IMR-90 (cell line): ENCODE measurements at regions of chr13 and their contacts with region 1.

Region 1: DNA sequence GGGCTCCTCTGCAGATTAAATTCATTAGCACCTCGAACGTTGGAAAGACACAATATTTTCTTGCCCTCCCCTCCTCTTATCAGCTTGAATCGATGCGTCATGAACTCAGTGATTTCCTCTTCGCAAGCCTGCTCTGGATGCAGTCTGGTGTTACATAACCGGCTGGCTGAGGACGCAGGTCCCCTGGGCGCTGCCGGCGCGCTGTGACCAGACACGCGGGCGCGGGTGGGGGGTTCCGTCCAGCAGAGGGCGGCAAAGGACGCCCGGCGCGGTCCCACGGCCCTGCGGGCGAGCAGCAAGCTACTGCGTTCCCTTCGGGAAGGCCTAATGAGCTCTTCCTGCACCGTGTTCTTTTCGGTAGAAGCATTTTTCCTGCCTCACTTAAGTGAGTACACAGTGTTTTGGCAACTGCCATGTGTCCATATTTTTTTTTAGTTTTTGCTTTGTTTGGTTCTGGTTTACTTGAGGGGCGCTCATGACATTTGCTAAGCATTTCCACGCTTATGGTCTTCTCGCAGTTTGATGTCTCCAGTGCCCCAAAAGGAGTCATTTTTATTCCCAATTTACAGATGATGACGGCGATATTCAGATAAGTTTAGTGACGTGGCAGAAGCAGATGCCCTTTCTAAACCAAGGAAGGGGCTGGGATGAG is 112.2 kb upstream of the MBNL2 start:
- DNase-seq: peak; percentile 85
- ATAC-seq: peak; percentile 90
- H3K4me3 ChIP-seq: no peak overlapping the region
- H3K27ac ChIP-seq: no peak overlapping the region
- H3K4me1 ChIP-seq: peaks cover 27% of the 10 kb centered on the region
- H3K27me3 ChIP-seq: no peaks in the 10 kb centered on the region
- CTCF ChIP-seq: peak; percentile 98
- POLR2A ChIP-seq: peak; percentile 44; the same call in 1 of the 2 replicates
- RAD21 ChIP-seq: peak; percentile 97

Region 2: GRCh38 chr13:96984051-96984508 is 125.9 kb before region 1 on chr13:
- CTCF ChIA-PET with region 1: no interaction called
- POLR2A ChIA-PET with region 1: no interaction called
- dilution Hi-C with region 1: no loop called
- in situ Hi-C with region 1: no loop called
- intact Hi-C with region 1: no loop called
- DNase-seq: no peak
- ATAC-seq: no peak
- H3K4me3 ChIP-seq: no peak overlapping the region
- H3K27ac ChIP-seq: no peak overlapping the region
- H3K4me1 ChIP-seq: no peaks in the 10 kb centered on the region
- H3K27me3 ChIP-seq: peaks cover 5% of the 10 kb centered on the region
- CTCF ChIP-seq: no peak
- POLR2A ChIP-seq: no peak
- RAD21 ChIP-seq: no peak

Region 3: GRCh38 chr13:97004096-97004876 is 105.7 kb before region 1 on chr13:
- CTCF ChIA-PET with region 1: no interaction called
- POLR2A ChIA-PET with region 1: no interaction called
- dilution Hi-C with region 1: no loop called
- in situ Hi-C with region 1: no loop called
- intact Hi-C with region 1: no loop called
- DNase-seq: peak; percentile 68
- ATAC-seq: peak; percentile 53
- H3K4me3 ChIP-seq: no peak overlapping the region
- H3K27ac ChIP-seq: no peak overlapping the region
- H3K4me1 ChIP-seq: peaks cover 9% of the 10 kb centered on the region
- H3K27me3 ChIP-seq: peaks cover 4% of the 10 kb centered on the region
- CTCF ChIP-seq: no peak
- POLR2A ChIP-seq: no peak
- RAD21 ChIP-seq: no peak

Region 4: DNA sequence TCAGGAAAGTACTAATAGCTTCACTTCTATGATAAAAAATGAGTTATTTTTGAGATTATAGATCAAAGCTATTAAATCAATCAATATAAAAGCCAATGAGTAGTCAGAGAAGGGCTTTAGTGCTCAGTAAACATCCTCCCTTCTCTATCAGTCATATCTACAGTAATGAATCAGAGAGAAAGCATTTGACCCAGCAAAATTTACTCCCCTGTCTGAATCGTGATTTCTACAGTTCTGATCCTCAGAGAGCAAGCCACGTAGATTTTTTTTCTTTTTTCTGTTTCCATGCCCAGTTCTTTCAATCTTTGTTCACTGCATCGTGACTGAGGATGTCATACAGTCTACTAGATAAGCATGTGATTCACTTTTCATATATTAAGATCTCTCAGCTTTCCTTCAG is 96.0 kb after region 1 on chr13:
- CTCF ChIA-PET with region 1: interaction called, 23 read pairs
- POLR2A ChIA-PET with region 1: no interaction called
- dilution Hi-C with region 1: no loop called
- in situ Hi-C with region 1: no loop called
- intact Hi-C with region 1: no loop called
- DNase-seq: peak; percentile 68
- ATAC-seq: peak; percentile 82
- H3K4me3 ChIP-seq: no peak overlapping the region
- H3K27ac ChIP-seq: no peak overlapping the region
- H3K4me1 ChIP-seq: no peaks in the 10 kb centered on the region; the same call in 1 of the 2 replicates
- H3K27me3 ChIP-seq: no peaks in the 10 kb centered on the region
- CTCF ChIP-seq: no peak
- POLR2A ChIP-seq: no peak
- RAD21 ChIP-seq: no peak

Region 5: DNA sequence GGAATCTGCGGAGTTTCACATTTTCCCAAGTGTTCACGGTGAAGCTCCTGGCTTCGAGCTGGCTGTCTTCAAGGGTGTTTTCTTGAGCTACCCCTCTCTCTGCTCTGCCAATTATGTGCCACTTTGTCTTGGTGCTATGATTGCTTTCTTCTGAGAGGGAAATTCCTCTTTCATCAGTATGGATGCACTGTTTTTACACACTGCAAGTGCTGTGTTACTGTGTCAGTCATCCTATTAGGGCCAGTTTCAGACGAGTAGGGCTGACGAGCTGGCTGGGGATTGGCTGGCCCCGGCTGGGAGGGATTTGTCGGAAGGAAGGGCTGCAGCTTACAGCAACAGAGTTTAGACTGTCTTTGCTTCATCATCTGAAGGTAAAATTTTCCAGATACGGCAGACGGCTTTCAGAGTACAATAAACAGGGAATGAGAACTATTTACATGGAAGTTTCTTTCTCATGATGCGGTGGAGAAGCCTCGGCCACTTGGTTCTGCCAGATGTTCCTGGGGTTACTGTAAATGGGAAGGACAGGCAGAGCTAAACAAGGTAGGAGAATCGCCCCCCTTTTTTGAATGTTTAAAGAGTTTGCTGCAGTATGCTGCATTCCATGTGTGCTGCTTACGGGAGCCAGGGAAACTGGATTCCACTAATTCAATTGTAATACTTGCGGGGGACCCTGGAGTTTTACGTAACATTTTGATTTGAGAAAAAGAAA is 112.2 kb after region 1 on chr13 and contains the start of gene MBNL2:
- CTCF ChIA-PET with region 1: interaction called, 21 read pairs
- POLR2A ChIA-PET with region 1: interaction called, 7 read pairs
- dilution Hi-C with region 1: no loop called
- in situ Hi-C with region 1: no loop called
- intact Hi-C with region 1: loop called (anchors 1 kb)
- DNase-seq: peak; percentile 94
- ATAC-seq: peak; percentile 97
- H3K4me3 ChIP-seq: peak within 1 kb of the TSS; percentile 90
- H3K27ac ChIP-seq: peak within 1 kb of the TSS; percentile 95
- H3K4me1 ChIP-seq: peaks cover 11% of the 10 kb centered on the region
- H3K27me3 ChIP-seq: no peaks in the 10 kb centered on the region
- CTCF ChIP-seq: no peak
- POLR2A ChIP-seq: peak; percentile 88
- RAD21 ChIP-seq: no peak
- total RNA-seq, gene MBNL2: 103 and 126 TPM in 2 replicates

Region 6: GRCh38 chr13:97240788-97241734 is 131.1 kb after region 1 on chr13:
- CTCF ChIA-PET with region 1: no interaction called
- POLR2A ChIA-PET with region 1: no interaction called
- dilution Hi-C with region 1: no loop called
- in situ Hi-C with region 1: no loop called
- intact Hi-C with region 1: no loop called
- DNase-seq: no peak
- ATAC-seq: no peak
- H3K4me3 ChIP-seq: no peak overlapping the region
- H3K27ac ChIP-seq: no peak overlapping the region
- H3K4me1 ChIP-seq: peaks cover 30% of the 10 kb centered on the region
- H3K27me3 ChIP-seq: no peaks in the 10 kb centered on the region
- CTCF ChIP-seq: no peak
- POLR2A ChIP-seq: no peak
- RAD21 ChIP-seq: no peak

Region 7: GRCh38 chr13:97359181-97360057 is 249.5 kb after region 1 on chr13:
- CTCF ChIA-PET with region 1: interaction called, 17 read pairs
- POLR2A ChIA-PET with region 1: no interaction called
- dilution Hi-C with region 1: no loop called
- in situ Hi-C with region 1: loop called (anchors 10 kb)
- intact Hi-C with region 1: loop called (anchors 1 kb)
- DNase-seq: peak; percentile 92
- ATAC-seq: peak; percentile 95
- H3K4me3 ChIP-seq: no peak overlapping the region
- H3K27ac ChIP-seq: no peak overlapping the region
- H3K4me1 ChIP-seq: peaks cover 3% of the 10 kb centered on the region; the same call in 1 of the 2 replicates
- H3K27me3 ChIP-seq: no peaks in the 10 kb centered on the region
- CTCF ChIP-seq: peak; percentile 81
- POLR2A ChIP-seq: 0 out of 2 replicates have a peak, but pooled peaks have one; percentile 37
- RAD21 ChIP-seq: peak; percentile 91

Region 8: DNA sequence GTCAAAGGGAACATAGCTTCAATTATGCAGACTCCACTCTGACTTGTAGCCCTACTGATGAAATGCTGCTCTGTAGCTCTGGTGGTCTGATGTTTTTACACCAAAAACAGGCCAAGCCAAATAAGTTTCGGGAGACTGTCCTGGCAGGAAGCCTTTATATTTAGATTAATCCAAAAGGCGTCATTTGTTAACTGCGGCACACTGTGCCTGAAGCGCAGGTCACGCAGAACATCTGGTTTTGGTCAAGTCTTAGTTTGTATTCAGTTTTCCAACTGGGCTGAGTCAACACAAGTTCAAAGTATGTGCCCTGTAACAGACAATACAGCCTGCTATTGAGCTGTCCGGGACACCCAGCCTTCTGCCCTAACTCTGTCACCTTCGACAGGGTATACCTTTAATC is 688.9 kb after region 1 on chr13:
- CTCF ChIA-PET with region 1: no interaction called
- POLR2A ChIA-PET with region 1: no interaction called
- dilution Hi-C with region 1: no loop called
- in situ Hi-C with region 1: no loop called
- intact Hi-C with region 1: loop called (anchors 1 kb)
- DNase-seq: peak; percentile 15
- ATAC-seq: peak; percentile 59
- H3K4me3 ChIP-seq: no peak overlapping the region
- H3K27ac ChIP-seq: no peak overlapping the region
- H3K4me1 ChIP-seq: peaks cover 2% of the 10 kb centered on the region; the same call in 1 of the 2 replicates
- H3K27me3 ChIP-seq: peaks cover 9% of the 10 kb centered on the region
- CTCF ChIP-seq: no peak
- POLR2A ChIP-seq: no peak
- RAD21 ChIP-seq: no peak